GM12878 (cell line): ENCODE measurements at regions of chr1 and their contacts with region 1.

Region 1: GRCh38 chr1:235259133-235259778 is 68.7 kb downstream of the ARID4B start:
- DNase-seq: peak; percentile 38
- ATAC-seq: peak; percentile 90
- H3K4me3 ChIP-seq: no peak overlapping the region
- H3K27ac ChIP-seq: peak overlapping the region; percentile 74
- H3K4me1 ChIP-seq: peaks cover 14% of the 10 kb centered on the region
- H3K27me3 ChIP-seq: no peaks in the 10 kb centered on the region
- CTCF ChIP-seq: no peak
- EP300 ChIP-seq: no peak
- POLR2A ChIP-seq: no peak
- RAD21 ChIP-seq: peak; percentile 28; the same call in 1 of the 2 replicates

Region 2: GRCh38 chr1:235239851-235240250 is 19.4 kb before region 1 on chr1:
- CTCF ChIA-PET with region 1: interaction called, 3 read pairs
- POLR2A ChIA-PET with region 1: no interaction called
- RAD21 ChIA-PET with region 1: interaction called, 3 read pairs
- SMC1A ChIA-PET with region 1: interaction called, 11 read pairs
- in situ Hi-C with region 1: no loop called
- intact Hi-C with region 1: no loop called
- DNase-seq: no peak
- ATAC-seq: no peak
- H3K4me3 ChIP-seq: no peak overlapping the region
- H3K27ac ChIP-seq: no peak overlapping the region
- H3K4me1 ChIP-seq: 0 out of 2 replicates have a peak, but pooled peaks cover 4% of the 10 kb centered on the region
- H3K27me3 ChIP-seq: no peaks in the 10 kb centered on the region
- CTCF ChIP-seq: no peak
- EP300 ChIP-seq: no peak
- POLR2A ChIP-seq: no peak
- RAD21 ChIP-seq: no peak